K562 (cell line): ENCODE measurements at regions of chr4 and their contacts with region 1.

Region 1: GRCh38 chr4:24584175-24584850 is at the start of gene DHX15:
- DNase-seq: peak; percentile 91 to 98 (median 93)
- ATAC-seq: peak; percentile 91
- H3K4me3 ChIP-seq: peak within 1 kb of the TSS; percentile 90
- H3K27ac ChIP-seq: peak within 1 kb of the TSS; percentile 99
- H3K4me1 ChIP-seq: peaks cover 7 to 21% of the 10 kb centered on the region in 2 experiments; a peak in 4 of 5 replicates
- H3K27me3 ChIP-seq: no peaks in the 10 kb centered on the region
- CTCF ChIP-seq: no peak
- EP300 ChIP-seq: no peak; the same call in none of the 2 replicates
- POLR2A ChIP-seq: peak; percentile 89
- RAD21 ChIP-seq: no peak
- polyA plus RNA-seq, gene DHX15: 177 to 240 TPM

Region 2: GRCh38 chr4:24570574-24571236 is 13.6 kb before region 1 on chr4:
- CTCF ChIA-PET with region 1: no interaction called
- POLR2A ChIA-PET with region 1: interaction called, 31 read pairs
- in situ Hi-C with region 1: no loop called
- intact Hi-C with region 1: no loop called
- DNase-seq: no peak
- ATAC-seq: peak; percentile 45
- H3K4me3 ChIP-seq: no peak overlapping the region
- H3K27ac ChIP-seq: no peak overlapping the region
- H3K4me1 ChIP-seq: no peaks in the 10 kb centered on the region; a peak in 1 of 5 replicates
- H3K27me3 ChIP-seq: no peaks in the 10 kb centered on the region
- CTCF ChIP-seq: no peak
- EP300 ChIP-seq: no peak
- POLR2A ChIP-seq: no peak
- RAD21 ChIP-seq: no peak

Region 3: GRCh38 chr4:24598026-24598425 is 13.7 kb after region 1 on chr4:
- CTCF ChIA-PET with region 1: no interaction called
- POLR2A ChIA-PET with region 1: interaction called, 11 read pairs
- in situ Hi-C with region 1: no loop called
- intact Hi-C with region 1: no loop called
- DNase-seq: no peak
- ATAC-seq: no peak
- H3K4me3 ChIP-seq: no peak overlapping the region
- H3K27ac ChIP-seq: no peak overlapping the region
- H3K4me1 ChIP-seq: peaks cover 0 to 4% of the 10 kb centered on the region in 2 experiments; a peak in 1 of 5 replicates
- H3K27me3 ChIP-seq: peaks cover 25 to 31% of the 10 kb centered on the region in 2 experiments; a peak in 4 of 5 replicates
- CTCF ChIP-seq: no peak
- EP300 ChIP-seq: no peak
- POLR2A ChIP-seq: no peak
- RAD21 ChIP-seq: no peak

Region 4: DNA sequence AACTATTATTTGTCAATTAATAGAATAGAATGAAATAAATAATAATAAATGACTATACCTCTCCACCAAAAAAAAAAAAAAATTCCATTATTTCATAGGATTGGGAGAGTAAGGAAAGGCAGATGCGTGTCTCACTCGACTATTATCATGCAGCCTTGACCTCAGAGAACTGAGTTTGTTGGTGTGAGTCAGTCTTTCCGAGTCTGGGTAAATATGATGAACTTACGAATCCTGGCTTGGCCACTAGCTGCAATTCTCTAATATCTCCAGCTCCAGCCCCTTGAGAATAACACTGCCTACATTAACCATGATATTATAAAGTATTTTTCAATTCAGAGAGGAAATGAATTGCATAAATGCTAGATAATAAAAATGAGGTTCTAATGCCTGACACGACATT is 46.6 kb after region 1 on chr4:
- CTCF ChIA-PET with region 1: no interaction called
- POLR2A ChIA-PET with region 1: no interaction called
- in situ Hi-C with region 1: no loop called
- intact Hi-C with region 1: no loop called
- DNase-seq: no peak
- ATAC-seq: no peak
- H3K4me3 ChIP-seq: no peak overlapping the region
- H3K27ac ChIP-seq: no peak overlapping the region
- H3K4me1 ChIP-seq: no peaks in the 10 kb centered on the region
- H3K27me3 ChIP-seq: peaks cover 0 to 8% of the 10 kb centered on the region in 2 experiments; a peak in 3 of 5 replicates
- CTCF ChIP-seq: no peak
- EP300 ChIP-seq: no peak
- POLR2A ChIP-seq: no peak
- RAD21 ChIP-seq: no peak